Spleen (tissue), 13 donors: ENCODE measurements at regions of chr16 and their contacts with region 1.

Region 1: DNA sequence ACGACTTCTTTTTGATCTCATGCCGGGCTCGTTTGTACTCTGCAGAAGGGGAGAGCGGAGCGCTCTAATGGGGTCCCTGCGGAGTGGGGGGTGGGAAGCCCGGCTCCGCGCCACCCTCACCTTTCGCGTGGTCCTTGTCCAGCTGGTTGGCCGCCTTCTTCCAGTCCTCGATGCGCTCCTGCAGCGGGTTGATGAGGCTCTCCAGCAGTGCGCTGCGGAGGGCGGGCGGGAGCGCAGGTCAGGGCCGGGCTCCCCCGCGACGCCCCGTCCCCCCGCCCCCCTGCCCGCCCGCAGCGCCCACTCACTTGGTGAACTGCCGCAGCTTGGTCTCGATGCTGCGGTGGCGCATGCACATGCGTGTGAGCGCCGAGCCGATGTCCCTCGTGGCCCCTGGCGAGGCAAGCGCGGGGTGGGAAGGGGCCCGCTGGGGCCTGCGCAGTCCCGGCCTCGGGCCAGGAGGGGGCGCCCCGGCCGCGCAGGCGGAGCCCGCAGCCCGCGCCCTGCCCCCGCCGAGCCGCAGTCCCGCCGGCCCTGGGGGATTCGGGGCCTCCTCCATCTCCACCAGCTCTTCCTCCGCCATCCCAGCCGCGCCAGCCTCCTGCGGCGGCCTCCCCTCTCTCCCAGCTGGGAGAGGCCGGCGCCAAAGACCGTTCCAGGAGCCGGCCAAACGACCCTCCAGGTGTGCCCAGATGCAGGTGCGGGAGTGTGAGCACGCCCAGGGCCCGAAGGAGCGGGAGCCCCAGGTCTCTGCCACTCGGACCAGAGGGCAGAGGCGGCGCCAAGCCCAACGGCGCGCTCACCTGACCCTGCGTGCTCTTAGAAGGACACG is 6.0 kb downstream of the MTSS2 start:
- DNase-seq: peak; percentile 74
- H3K4me3 ChIP-seq: peak overlapping the region in 2 of 8 donors; percentile 4 to 76
- H3K27ac ChIP-seq: peak overlapping the region in 7 of 8 donors; percentile 17 to 88 (median 84)
- H3K4me1 ChIP-seq: peaks cover 18 to 73% (median 47%) of the 10 kb centered on the region in 6 donors
- H3K27me3 ChIP-seq: peaks cover 0 to 26% (median 4%) of the 10 kb centered on the region in 7 donors
- CTCF ChIP-seq: peak in 6 of 11 experiments; percentile 26 to 61 (median 50)
- POLR2A ChIP-seq: no peak

Region 2: DNA sequence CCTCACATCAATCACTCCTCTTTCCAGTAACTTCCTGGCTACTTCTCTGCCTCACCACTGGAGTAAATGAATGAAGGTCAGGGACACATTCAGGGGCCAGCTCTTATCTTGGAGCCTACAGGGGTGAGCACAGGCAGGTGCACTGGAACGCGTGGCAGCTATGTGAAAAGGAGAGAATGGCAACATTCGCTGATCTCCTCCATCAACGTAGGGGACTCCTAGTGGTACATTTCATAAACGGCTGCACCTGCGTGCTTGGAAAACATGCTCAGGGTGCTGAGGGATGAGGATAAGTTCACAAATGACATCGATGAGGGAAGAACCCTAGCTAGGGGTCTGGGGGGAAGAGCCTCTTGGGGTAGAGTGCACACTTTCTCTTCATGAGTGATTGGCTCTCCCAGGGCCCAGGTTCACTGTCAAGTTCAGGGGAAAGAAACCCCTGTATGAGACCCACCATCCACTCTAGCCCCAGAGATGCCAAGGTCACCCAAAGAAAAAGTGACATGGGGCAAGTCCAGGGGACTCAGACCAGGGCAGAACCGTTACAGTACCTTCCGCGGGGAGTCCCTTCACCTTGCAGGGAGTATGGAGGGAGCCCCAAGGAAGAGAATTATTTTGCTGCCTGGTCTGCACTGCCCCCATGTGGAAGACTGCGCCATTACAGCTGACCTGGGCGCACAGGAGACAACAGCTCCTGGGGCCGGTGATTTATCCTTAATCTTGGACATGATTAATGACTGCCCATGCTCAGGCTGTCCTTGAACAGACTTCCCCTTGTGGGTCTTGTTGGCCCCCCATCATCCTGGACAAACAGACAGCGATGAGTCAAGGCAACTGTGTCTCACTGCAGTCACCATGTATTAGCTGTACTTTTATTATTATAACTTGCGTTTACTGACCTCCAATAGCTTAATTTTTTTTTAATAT is 91.0 kb after region 1 on chr16:
- intact Hi-C with region 1: loop called (anchors 5 kb)
- DNase-seq: no peak
- H3K4me3 ChIP-seq: no peak overlapping the region
- H3K27ac ChIP-seq: peak overlapping the region in 1 of 8 donors; percentile 8
- H3K4me1 ChIP-seq: peaks cover 0 to 19% (median 12%) of the 10 kb centered on the region in 6 donors
- H3K27me3 ChIP-seq: no peaks in the 10 kb centered on the region
- CTCF ChIP-seq: peak; percentile 68 to 90 (median 85)
- POLR2A ChIP-seq: no peak